PC-9 (cell line): ENCODE measurements at regions of chrX and their contacts with region 1.

Region 1: GRCh38 chrX:78429172-78429571 is 101.8 kb upstream of the CYSLTR1 start:
- DNase-seq: no peak
- H3K4me3 ChIP-seq: no peak overlapping the region
- H3K27ac ChIP-seq: no peak overlapping the region
- H3K4me1 ChIP-seq: no peaks in the 10 kb centered on the region
- H3K27me3 ChIP-seq: no peaks in the 10 kb centered on the region
- CTCF ChIP-seq: no peak

Region 2: DNA sequence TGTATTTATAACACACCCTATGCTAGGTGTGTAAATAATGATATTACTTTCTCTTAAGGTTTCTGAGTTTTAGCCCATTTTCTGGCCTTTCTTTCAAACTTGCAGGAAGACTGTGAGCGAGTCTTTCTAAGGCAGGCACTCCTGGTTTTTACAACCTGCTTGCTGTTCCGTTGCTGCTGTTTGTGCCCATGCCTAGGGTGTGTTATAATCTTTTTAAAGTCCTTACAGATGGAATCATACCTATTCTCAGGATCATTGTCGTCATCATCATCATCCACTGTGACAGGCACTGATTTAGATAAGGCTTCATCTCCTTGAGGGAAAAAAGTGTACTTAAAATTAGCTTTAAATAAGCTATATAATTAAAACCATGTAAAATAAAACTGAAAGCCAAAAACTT is 753.2 kb before region 1 on chrX:
- CTCF ChIA-PET with region 1: no interaction called
- POLR2A ChIA-PET with region 1: no interaction called
- intact Hi-C with region 1: no loop called
- DNase-seq: no peak
- H3K4me3 ChIP-seq: no peak overlapping the region
- H3K27ac ChIP-seq: no peak overlapping the region
- H3K4me1 ChIP-seq: no peaks in the 10 kb centered on the region
- H3K27me3 ChIP-seq: no peaks in the 10 kb centered on the region
- CTCF ChIP-seq: no peak

Region 3: GRCh38 chrX:78378476-78379115 is 50.6 kb before region 1 on chrX:
- CTCF ChIA-PET with region 1: no interaction called
- POLR2A ChIA-PET with region 1: no interaction called
- intact Hi-C with region 1: loop called (anchors 2 kb)
- DNase-seq: no peak
- H3K4me3 ChIP-seq: no peak overlapping the region
- H3K27ac ChIP-seq: no peak overlapping the region
- H3K4me1 ChIP-seq: no peaks in the 10 kb centered on the region
- H3K27me3 ChIP-seq: no peaks in the 10 kb centered on the region
- CTCF ChIP-seq: no peak

Region 4: DNA sequence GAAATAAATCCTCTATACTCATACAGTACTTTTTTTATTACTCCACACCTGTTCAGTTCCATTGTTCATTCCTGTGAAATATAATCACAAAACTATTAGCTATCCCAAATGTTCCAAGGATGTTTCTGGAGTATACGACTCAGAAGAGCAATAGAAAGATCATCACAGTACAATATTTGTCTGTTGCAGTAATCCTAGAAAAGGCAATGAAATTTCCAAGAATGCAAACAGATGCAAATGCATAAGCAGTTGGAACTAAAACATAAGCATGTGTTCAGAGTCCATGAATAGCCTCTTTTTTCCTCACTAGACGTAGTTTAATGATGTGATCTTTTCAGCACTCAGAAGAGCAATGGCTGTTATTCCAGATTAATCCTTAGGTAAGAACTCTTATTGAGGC is 174.7 kb after region 1 on chrX:
- CTCF ChIA-PET with region 1: no interaction called
- POLR2A ChIA-PET with region 1: no interaction called
- intact Hi-C with region 1: no loop called
- DNase-seq: no peak
- H3K4me3 ChIP-seq: no peak overlapping the region
- H3K27ac ChIP-seq: no peak overlapping the region
- H3K4me1 ChIP-seq: no peaks in the 10 kb centered on the region
- H3K27me3 ChIP-seq: no peaks in the 10 kb centered on the region
- CTCF ChIP-seq: no peak

Region 5: GRCh38 chrX:78725287-78725686 is 296.1 kb after region 1 on chrX:
- CTCF ChIA-PET with region 1: no interaction called
- POLR2A ChIA-PET with region 1: no interaction called
- intact Hi-C with region 1: no loop called
- DNase-seq: no peak
- H3K4me3 ChIP-seq: no peak overlapping the region
- H3K27ac ChIP-seq: no peak overlapping the region
- H3K4me1 ChIP-seq: no peaks in the 10 kb centered on the region
- H3K27me3 ChIP-seq: no peaks in the 10 kb centered on the region
- CTCF ChIP-seq: no peak